ENCODE measurements at regions of chr5 and their contacts with region 1.

Region 1: GRCh38 chr5:111530298-111530740 is 18.0 kb upstream of the STARD4 start:
- DNase-seq: peak; percentile 91
- H3K4me3 Mint-ChIP-seq: peak overlapping the region; percentile 0
- H3K27ac Mint-ChIP-seq: peak overlapping the region; percentile 81
- H3K4me1 Mint-ChIP-seq: peaks cover 22% of the 10 kb centered on the region
- H3K27me3 Mint-ChIP-seq: peaks cover 16% of the 10 kb centered on the region

Region 2: DNA sequence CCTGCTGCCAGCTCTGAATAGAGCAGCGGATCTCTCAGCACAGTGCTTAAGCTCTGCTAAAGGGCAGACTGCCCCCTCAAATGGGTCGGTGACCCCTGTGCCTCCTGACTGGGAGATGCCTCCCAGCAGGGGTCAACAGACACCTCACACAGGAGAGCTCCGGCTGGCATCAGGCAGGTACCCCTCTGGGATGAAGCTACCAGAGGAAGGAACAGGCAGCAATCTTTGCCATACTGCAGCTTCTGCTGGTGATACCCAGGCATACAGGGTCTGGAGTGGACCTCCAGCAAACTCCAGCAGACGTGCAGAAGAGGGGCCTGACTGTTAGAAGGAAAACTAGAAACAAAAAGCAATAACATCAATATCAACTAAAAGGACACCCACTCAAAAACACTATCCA is 935.5 kb before region 1 on chr5:
- CTCF ChIA-PET with region 1: no interaction called
- DNase-seq: no peak
- H3K4me3 Mint-ChIP-seq: no peak overlapping the region
- H3K27ac Mint-ChIP-seq: no peak overlapping the region
- H3K4me1 Mint-ChIP-seq: no peaks in the 10 kb centered on the region
- H3K27me3 Mint-ChIP-seq: no peaks in the 10 kb centered on the region

Region 3: DNA sequence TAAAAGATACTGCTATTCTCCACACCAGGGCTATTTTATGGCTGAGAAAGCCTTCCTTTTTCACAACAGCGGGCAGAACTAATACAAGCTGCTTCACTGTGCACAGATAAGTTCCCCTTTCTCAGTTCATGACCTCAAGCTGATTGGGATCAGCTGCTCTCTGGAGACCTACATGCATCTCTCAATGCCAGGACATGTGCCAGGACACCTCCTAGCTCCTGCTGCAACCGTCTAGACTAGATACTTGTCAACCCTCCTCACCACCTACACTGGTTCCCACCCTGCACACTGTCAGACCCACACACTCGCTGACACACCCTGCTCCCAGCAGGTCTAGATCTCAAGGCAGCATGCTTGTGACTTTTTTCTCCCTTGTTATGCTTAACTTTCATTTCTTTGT is 57.7 kb before region 1 on chr5:
- CTCF ChIA-PET with region 1: no interaction called
- DNase-seq: no peak
- H3K4me3 Mint-ChIP-seq: no peak overlapping the region
- H3K27ac Mint-ChIP-seq: peak overlapping the region; percentile 33
- H3K4me1 Mint-ChIP-seq: no peaks in the 10 kb centered on the region
- H3K27me3 Mint-ChIP-seq: no peaks in the 10 kb centered on the region

Region 4: DNA sequence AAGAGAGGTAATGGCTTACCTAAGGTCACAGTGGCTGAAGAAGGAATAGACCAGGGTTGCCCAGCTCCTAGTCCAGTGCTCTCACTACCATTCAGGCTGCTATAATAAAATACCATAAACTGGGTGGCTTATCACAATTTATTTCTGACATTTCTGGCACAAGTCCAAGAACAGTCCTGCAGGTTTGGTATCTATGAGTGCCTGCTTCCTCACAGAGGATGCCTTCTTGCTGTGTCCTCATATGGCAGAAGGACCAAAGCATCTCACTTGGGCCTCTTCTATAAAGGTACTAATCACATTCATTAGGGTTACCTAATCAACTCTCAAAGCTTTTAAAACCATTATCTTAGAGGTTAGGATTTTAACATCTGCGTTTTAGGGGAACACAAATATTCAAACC is 35.2 kb before region 1 on chr5:
- CTCF ChIA-PET with region 1: interaction called, 14 read pairs
- DNase-seq: no peak
- H3K4me3 Mint-ChIP-seq: no peak overlapping the region
- H3K27ac Mint-ChIP-seq: peak overlapping the region; percentile 14
- H3K4me1 Mint-ChIP-seq: peaks cover 18% of the 10 kb centered on the region
- H3K27me3 Mint-ChIP-seq: no peaks in the 10 kb centered on the region

Region 5: GRCh38 chr5:111512375-111513130 is 17.8 kb before region 1 on chr5 and contains the start of gene STARD4:
- CTCF ChIA-PET with region 1: interaction called, 11 read pairs
- DNase-seq: peak; percentile 96
- H3K4me3 Mint-ChIP-seq: peak within 1 kb of the TSS; percentile 84
- H3K27ac Mint-ChIP-seq: peak within 1 kb of the TSS; percentile 91
- H3K4me1 Mint-ChIP-seq: peaks cover 48% of the 10 kb centered on the region
- H3K27me3 Mint-ChIP-seq: no peaks in the 10 kb centered on the region

Region 6: GRCh38 chr5:111550279-111551020 is 20.1 kb after region 1 on chr5:
- CTCF ChIA-PET with region 1: interaction called, 14 read pairs
- DNase-seq: peak; percentile 78
- H3K4me3 Mint-ChIP-seq: no peak overlapping the region
- H3K27ac Mint-ChIP-seq: no peak overlapping the region
- H3K4me1 Mint-ChIP-seq: peaks cover 18% of the 10 kb centered on the region
- H3K27me3 Mint-ChIP-seq: peaks cover 5% of the 10 kb centered on the region

Region 7: DNA sequence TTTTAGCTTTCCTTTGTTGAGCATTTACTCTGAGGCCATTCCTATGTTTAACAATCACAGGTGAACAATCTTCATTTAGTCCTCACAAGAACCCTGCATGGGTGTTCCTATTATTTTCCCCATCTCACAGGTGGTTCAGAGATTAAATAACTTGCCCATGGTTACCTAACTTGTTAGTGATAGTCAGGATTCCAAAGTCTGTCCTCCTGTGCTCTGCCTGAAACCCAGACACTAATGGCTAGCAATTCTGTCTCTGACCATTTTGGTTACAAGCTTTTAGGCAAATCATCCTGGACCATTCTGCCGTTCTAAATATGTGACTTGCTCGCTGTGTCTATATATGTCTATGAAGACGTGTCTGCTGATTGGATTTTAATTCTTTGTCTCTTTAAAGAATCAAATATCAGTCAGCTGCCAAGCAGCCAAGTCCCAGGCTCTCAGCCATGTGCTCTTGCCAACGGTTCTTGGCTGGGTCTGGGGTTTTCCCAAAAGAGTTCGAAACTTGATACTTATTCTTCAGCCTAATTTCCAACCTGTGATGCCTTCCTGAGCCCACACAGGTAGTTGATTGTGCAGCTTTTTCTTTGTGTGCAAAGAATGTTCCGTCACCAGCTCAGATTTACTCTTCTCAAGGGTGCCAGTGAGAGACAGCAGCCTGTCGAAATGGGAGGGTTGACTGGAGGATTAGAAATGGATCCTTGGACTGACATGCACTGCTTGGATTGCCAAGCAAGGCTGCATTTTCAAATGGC is 105.0 kb after region 1 on chr5:
- CTCF ChIA-PET with region 1: no interaction called
- DNase-seq: no peak
- H3K4me3 Mint-ChIP-seq: no peak overlapping the region
- H3K27ac Mint-ChIP-seq: no peak overlapping the region
- H3K4me1 Mint-ChIP-seq: no peaks in the 10 kb centered on the region
- H3K27me3 Mint-ChIP-seq: no peaks in the 10 kb centered on the region

Measured in activated naive CD4-positive, alpha-beta T cell treated with anti-CD3 and anti-CD28 coated beads, Interleukin-2, amount 10 ng/mL, durations not matched to agents 7 days and 5 days (primary cell).